ENCODE measurements at regions of chr4 and their contacts with region 1.

Region 1: GRCh38 chr4:17092736-17093437 is 194.4 kb upstream of the LDB2 start:
- DNase-seq: peak; percentile 24
- H3K4me3 ChIP-seq: no peak overlapping the region
- H3K27ac ChIP-seq: peak overlapping the region; percentile 97
- H3K4me1 ChIP-seq: peaks cover 60% of the 10 kb centered on the region
- H3K27me3 ChIP-seq: no peaks in the 10 kb centered on the region
- CTCF ChIP-seq: no peak

Region 2: DNA sequence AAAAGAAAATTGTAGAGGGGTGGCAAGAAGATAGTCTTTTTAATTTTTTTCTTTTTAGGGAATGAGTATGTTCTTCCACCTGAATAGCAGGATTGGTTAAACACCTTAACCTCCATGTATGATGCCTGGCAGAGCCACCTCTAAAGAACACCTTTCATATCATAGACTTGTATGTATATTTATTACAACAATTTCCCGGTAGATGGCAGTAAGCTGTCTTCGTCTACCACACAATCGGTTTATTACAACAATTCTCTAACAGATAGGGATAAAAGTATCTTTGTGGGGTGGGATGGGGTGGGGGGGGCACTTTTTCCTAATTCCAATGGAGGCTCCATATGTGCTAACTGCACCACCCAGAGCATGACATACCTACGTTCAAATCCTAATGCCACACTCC is 450.0 kb before region 1 on chr4:
- CTCF ChIA-PET with region 1: no interaction called
- POLR2A ChIA-PET with region 1: no interaction called
- intact Hi-C with region 1: loop called (anchors 10 kb)
- DNase-seq: peak; percentile 53
- H3K4me3 ChIP-seq: no peak overlapping the region
- H3K27ac ChIP-seq: no peak overlapping the region
- H3K4me1 ChIP-seq: peaks cover 38% of the 10 kb centered on the region
- H3K27me3 ChIP-seq: no peaks in the 10 kb centered on the region
- CTCF ChIP-seq: peak; percentile 56

Region 3: GRCh38 chr4:16692961-16693506 is 399.9 kb before region 1 on chr4:
- CTCF ChIA-PET with region 1: no interaction called
- POLR2A ChIA-PET with region 1: no interaction called
- intact Hi-C with region 1: loop called (anchors 1 kb)
- DNase-seq: no peak
- H3K4me3 ChIP-seq: no peak overlapping the region
- H3K27ac ChIP-seq: peak overlapping the region; percentile 78
- H3K4me1 ChIP-seq: peaks cover 53% of the 10 kb centered on the region
- H3K27me3 ChIP-seq: no peaks in the 10 kb centered on the region
- CTCF ChIP-seq: no peak

Region 4: DNA sequence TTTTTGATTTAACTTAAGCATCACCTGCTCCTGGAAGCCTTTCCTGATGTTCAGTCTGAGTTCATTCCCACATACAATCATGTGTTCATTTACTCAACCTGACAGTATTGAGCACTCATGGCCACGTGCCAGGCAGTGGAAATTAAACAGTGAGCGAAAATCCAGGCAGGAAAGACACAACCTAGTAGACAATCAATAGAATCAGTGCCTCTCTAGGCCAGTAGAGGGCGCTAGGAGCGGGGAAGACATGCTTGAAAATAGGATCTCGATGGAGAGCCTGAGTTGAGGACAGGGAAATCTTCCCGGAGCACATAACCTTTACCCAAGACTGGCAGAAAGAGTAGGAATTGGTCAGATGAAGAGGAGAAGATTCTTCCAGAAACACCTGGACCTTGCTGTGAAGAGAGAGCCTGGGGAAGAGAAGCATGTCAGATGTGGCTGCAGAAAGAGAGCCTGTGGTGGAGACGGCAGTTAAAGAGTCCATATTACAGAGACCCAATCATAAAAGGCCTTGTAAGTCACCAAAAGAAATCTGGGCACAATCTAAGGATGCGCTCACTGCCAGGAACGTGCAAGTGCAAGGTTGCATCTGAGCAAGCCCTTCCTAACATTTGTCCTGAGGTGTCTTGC is 298.0 kb before region 1 on chr4:
- CTCF ChIA-PET with region 1: no interaction called
- POLR2A ChIA-PET with region 1: no interaction called
- intact Hi-C with region 1: loop called (anchors 10 kb)
- DNase-seq: peak; percentile 89
- H3K4me3 ChIP-seq: no peak overlapping the region
- H3K27ac ChIP-seq: no peak overlapping the region
- H3K4me1 ChIP-seq: peaks cover 6% of the 10 kb centered on the region
- H3K27me3 ChIP-seq: no peaks in the 10 kb centered on the region
- CTCF ChIP-seq: peak; percentile 98

Region 5: DNA sequence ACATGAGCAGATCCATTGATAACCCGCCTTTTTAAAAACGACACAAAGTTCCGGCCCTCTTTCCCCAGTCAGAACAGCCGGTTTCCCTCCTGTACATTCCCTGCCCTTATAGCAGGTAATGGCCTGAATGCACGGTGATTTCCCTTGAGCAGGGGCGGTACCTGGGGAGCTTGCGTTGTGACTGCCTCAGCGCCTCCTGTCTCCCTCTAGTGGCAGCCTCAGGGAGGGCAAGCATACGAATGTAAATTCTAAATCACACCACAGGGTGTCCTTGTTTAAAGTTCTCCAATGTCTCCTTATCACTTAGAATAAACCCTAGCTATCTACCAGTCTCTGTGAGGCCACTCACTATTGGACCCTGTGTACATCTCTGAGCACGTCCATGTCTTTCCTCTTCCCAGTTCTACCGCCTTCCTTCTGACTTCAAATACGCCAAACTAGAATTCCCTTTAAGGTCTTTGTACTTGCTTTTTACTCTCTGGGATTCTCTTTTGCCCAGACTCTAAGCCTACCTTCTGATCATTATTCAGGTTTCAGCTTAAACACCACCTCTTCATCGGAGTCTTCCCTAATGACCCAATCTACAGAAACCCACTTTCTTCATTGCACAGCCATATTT is 176.1 kb before region 1 on chr4:
- CTCF ChIA-PET with region 1: no interaction called
- POLR2A ChIA-PET with region 1: no interaction called
- intact Hi-C with region 1: loop called (anchors 5 kb)
- DNase-seq: peak; percentile 82
- H3K4me3 ChIP-seq: no peak overlapping the region
- H3K27ac ChIP-seq: no peak overlapping the region
- H3K4me1 ChIP-seq: no peaks in the 10 kb centered on the region
- H3K27me3 ChIP-seq: no peaks in the 10 kb centered on the region
- CTCF ChIP-seq: peak; percentile 97

Measured in A673 (cell line).